Heart left ventricle (tissue), 16 donors: ENCODE measurements at regions of chr4 and their contacts with region 1.

Region 1: DNA sequence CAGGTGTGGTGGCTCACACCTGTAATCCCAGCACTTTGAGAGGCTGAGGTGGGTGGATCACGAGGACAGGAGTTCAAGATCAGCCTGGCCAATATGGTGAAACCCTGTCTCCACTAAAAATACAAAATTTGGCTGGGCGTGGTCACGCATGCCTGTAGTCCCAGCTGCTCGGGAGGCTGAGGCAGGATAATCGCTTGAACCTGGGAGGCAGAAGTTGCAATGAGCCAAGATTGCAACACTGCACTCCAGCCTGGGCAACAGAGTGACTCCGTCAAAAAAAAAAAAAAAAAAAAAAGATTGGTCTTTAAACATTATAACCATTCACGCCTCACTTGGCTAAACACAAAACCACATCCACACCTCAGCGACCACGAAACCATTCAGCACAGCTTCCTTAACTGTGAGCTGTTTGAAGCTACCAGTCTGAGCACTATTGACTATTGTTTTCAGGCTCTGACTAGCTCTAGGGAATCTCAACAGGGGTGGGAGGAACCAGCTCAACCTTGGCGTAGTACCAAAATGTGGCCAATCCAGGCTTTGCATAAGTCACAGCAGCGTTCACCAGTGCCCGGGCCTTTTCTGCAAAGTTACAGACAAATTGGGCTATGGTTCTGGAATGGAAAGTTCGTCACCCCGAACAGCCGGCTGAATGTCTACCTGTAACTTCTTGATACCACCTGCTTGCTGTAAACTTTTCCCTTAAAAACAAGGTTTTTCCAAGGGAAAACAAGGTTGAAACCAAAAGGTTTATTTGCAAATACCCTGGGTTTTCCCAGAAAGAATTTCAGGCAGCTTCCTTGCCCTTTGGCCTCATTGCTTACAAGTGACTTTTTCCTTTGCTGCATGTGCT is 73.6 kb upstream of the DHX15 start:
- DNase-seq: peak in 3 of 5 donors; percentile 23 to 49 (median 41)
- ATAC-seq: peak in 3 of 4 donors; percentile 50 to 79 (median 69)
- H3K4me3 ChIP-seq: no peak overlapping the region
- H3K27ac ChIP-seq: no peak overlapping the region
- H3K4me1 ChIP-seq: peaks cover 0 to 5% (median 0%) of the 10 kb centered on the region in 12 donors
- H3K27me3 ChIP-seq: no peaks in the 10 kb centered on the region
- CTCF ChIP-seq: no peak
- POLR2A ChIP-seq: no peak

Region 2: GRCh38 chr4:24642981-24643547 is 14.9 kb before region 1 on chr4:
- intact Hi-C with region 1: loop called in 1 of 10 experiments (anchors 1 kb)
- DNase-seq: no peak
- ATAC-seq: peak in 3 of 4 donors; percentile 22 to 65 (median 61)
- H3K4me3 ChIP-seq: no peak overlapping the region
- H3K27ac ChIP-seq: no peak overlapping the region
- H3K4me1 ChIP-seq: peaks cover 0 to 12% (median 2%) of the 10 kb centered on the region in 12 donors
- H3K27me3 ChIP-seq: no peaks in the 10 kb centered on the region
- CTCF ChIP-seq: no peak
- POLR2A ChIP-seq: no peak

Region 3: DNA sequence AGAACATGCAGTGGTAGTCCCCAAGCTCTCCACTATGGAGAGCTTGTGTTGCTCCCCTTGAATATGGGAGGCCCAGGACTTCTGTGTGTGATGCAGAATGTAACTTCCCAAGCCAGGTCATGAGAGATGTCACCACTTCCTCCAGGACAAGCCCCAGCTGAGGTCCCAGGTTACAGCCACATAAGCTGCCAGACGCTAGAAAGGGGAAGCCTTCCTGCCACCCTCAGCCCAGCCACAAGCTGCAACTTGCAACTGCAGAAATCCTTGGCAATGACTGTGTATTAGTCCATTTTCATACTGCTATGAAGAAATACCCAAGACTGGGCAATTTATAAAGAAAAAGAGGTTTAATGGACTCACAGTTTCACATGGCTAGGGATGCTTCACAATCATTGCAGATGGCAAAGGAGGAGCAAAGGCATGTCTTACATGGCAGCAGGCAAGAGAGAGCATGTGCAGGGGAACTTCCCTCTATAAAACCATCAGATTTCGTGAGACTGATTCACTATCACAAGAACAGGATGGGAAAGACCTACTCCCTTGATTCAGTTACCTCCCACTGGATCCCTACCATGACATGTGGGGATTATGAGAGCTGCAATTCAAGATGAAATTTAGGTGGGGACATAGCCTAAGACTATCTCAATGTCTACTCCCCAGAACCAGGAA is 17.9 kb after region 1 on chr4:
- intact Hi-C with region 1: no loop called
- DNase-seq: no peak
- ATAC-seq: no peak
- H3K4me3 ChIP-seq: no peak overlapping the region
- H3K27ac ChIP-seq: no peak overlapping the region
- H3K4me1 ChIP-seq: no peaks in the 10 kb centered on the region
- H3K27me3 ChIP-seq: no peaks in the 10 kb centered on the region
- CTCF ChIP-seq: no peak
- POLR2A ChIP-seq: no peak